A673 (cell line): ENCODE measurements at regions of chr3 and their contacts with region 1.

Region 1: GRCh38 chr3:134600685-134601463 is 49.9 kb downstream of the KY start:
- DNase-seq: peak; percentile 85
- H3K4me3 ChIP-seq: peak overlapping the region; percentile 5
- H3K27ac ChIP-seq: no peak overlapping the region
- H3K4me1 ChIP-seq: peaks cover 20% of the 10 kb centered on the region
- H3K27me3 ChIP-seq: peaks cover 3% of the 10 kb centered on the region
- CTCF ChIP-seq: peak; percentile 99

Region 2: DNA sequence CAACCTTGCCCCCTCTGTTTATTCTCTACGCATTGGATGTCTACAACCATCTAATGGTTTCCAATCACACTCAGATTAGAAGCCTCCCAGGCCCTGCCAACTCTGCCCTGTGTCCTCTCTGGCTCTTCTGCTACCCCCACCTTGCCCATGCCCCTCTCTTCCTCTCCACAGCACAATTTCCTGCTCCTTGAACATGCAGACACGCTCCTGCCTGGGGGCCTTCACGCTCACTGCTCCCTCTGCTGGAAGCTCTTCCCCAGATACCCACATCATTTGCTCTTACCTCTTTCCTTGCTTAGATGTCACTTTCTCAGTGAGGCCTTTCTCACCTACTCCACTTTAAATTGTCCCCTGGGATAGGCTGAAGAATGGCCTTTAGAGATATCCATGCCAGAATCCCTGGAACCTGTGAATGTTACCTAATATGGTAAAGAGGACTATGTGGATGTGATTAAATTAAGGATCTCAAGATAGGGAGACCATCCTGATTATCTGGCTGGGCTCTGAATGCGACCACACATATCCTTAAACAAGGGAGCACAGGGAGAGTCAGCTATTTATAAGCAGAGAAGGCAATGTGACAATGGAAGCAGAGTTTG is 40.1 kb after region 1 on chr3:
- CTCF ChIA-PET with region 1: no interaction called
- POLR2A ChIA-PET with region 1: no interaction called
- intact Hi-C with region 1: loop called (anchors 1 kb)
- DNase-seq: peak; percentile 36
- H3K4me3 ChIP-seq: no peak overlapping the region
- H3K27ac ChIP-seq: no peak overlapping the region
- H3K4me1 ChIP-seq: no peaks in the 10 kb centered on the region
- H3K27me3 ChIP-seq: peaks cover 7% of the 10 kb centered on the region
- CTCF ChIP-seq: peak; percentile 65

Region 3: DNA sequence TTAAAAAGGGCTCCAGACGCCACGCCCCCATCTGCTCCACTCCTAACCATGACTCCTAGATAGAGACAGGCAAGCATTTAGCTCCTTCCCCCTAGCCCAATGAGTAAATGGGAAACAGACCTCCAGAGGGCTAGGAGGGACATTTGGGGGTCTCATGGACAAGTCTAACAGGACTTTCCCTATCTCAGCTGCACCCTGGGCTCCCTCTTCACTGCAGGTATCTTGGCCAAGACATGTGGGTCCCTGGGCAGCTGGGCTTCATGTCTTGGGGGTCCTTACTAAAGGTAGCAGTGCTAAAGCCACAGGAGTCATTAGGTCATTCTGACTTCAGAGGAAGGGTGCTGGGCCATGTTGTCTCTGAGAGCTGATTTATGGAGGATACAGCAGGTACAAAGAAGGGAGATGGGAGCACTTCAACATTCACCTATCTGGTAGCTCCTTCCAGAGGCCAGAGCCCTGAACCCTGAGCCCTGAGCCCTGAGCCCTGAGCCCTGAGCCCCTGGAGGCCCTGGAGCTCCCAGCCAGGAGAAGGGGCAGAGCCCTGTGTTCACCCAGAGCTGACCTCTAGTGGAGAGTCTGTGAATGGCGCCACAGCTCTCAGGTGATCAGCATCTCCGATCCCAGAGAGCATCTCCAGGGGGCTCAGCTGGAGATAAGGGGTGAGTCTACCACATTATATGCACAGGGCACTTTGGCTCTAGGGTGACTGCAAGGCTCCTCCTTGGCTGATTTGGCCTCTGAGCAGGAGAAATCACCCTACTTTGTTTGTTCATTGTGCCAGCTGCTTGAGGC is 154.1 kb after region 1 on chr3:
- CTCF ChIA-PET with region 1: interaction called, 5 read pairs
- POLR2A ChIA-PET with region 1: no interaction called
- intact Hi-C with region 1: loop called (anchors 2 kb)
- DNase-seq: peak; percentile 41
- H3K4me3 ChIP-seq: no peak overlapping the region
- H3K27ac ChIP-seq: no peak overlapping the region
- H3K4me1 ChIP-seq: no peaks in the 10 kb centered on the region
- H3K27me3 ChIP-seq: no peaks in the 10 kb centered on the region
- CTCF ChIP-seq: peak; percentile 60

Region 4: GRCh38 chr3:134794950-134795745 is 194.3 kb after region 1 on chr3 and contains the start of gene EPHB1:
- CTCF ChIA-PET with region 1: interaction called, 4 read pairs
- POLR2A ChIA-PET with region 1: no interaction called
- intact Hi-C with region 1: loop called (anchors 2 kb)
- DNase-seq: peak; percentile 95
- H3K4me3 ChIP-seq: peak within 1 kb of the TSS; percentile 46
- H3K27ac ChIP-seq: no peak within 1 kb of the TSS
- H3K4me1 ChIP-seq: peaks cover 9% of the 10 kb centered on the region
- H3K27me3 ChIP-seq: peaks cover 52% of the 10 kb centered on the region
- CTCF ChIP-seq: peak; percentile 93
- total RNA-seq, gene EPHB1: 0.11 and 0.61 TPM in 2 replicates

Region 5: DNA sequence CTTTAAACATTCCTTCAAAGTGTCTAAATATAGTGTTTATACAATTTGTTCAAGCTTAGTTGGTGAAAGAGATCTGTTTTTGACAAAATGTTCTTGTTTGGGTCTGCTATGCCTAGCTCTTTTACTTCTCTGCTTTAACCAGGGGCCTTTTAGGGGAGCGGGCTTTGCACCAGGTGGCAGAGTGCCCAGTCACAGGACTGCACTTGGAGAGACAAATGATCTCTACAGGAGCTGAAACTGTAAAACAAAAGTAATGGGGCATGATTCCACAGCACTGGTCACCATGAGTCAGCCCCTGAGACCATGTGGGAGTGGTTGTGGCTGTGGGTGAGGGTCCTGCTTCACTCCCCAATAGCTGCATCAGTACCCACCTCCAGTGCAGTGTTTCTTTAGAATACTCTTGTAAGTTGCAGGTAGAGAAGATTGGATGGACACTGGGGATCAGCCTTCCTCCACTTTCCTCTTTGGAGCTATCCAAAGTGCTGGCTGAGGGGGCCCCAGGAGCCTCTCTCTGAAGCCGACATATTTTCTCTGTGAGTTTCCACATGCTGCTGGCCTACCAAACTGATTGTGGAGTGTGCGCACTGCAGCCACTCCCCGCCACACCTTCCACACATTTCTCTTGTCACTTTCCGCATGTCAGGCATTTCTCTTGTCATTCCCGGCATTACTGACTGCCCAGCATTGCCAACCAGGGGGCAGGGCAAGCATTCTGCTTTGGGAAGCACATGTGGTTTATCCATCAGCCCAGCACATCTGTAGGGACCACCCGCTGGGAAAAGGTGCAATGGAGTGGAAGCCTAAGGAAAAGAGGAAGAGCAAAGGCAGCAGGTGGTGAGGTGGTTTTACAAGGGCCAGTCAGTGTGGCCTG is 304.1 kb after region 1 on chr3:
- CTCF ChIA-PET with region 1: no interaction called
- POLR2A ChIA-PET with region 1: no interaction called
- intact Hi-C with region 1: no loop called
- DNase-seq: no peak
- H3K4me3 ChIP-seq: no peak overlapping the region
- H3K27ac ChIP-seq: no peak overlapping the region
- H3K4me1 ChIP-seq: no peaks in the 10 kb centered on the region
- H3K27me3 ChIP-seq: peaks cover 17% of the 10 kb centered on the region
- CTCF ChIP-seq: no peak

Region 6: GRCh38 chr3:135503760-135504686 is 903.1 kb after region 1 on chr3:
- CTCF ChIA-PET with region 1: interaction called, 6 read pairs
- POLR2A ChIA-PET with region 1: no interaction called
- intact Hi-C with region 1: loop called (anchors 5 kb)
- DNase-seq: peak; percentile 75
- H3K4me3 ChIP-seq: no peak overlapping the region
- H3K27ac ChIP-seq: no peak overlapping the region
- H3K4me1 ChIP-seq: no peaks in the 10 kb centered on the region
- H3K27me3 ChIP-seq: peaks cover 85% of the 10 kb centered on the region
- CTCF ChIP-seq: peak; percentile 80

Region 7: GRCh38 chr3:135895106-135895733 is 1294.3 kb after region 1 on chr3:
- CTCF ChIA-PET with region 1: no interaction called
- POLR2A ChIA-PET with region 1: no interaction called
- intact Hi-C with region 1: loop called (anchors 2 kb)
- DNase-seq: peak; percentile 78
- H3K4me3 ChIP-seq: no peak overlapping the region
- H3K27ac ChIP-seq: no peak overlapping the region
- H3K4me1 ChIP-seq: no peaks in the 10 kb centered on the region
- H3K27me3 ChIP-seq: peaks cover 23% of the 10 kb centered on the region
- CTCF ChIP-seq: peak; percentile 90